ENCODE measurements at regions of chr12 and their contacts with region 1.

Region 1: DNA sequence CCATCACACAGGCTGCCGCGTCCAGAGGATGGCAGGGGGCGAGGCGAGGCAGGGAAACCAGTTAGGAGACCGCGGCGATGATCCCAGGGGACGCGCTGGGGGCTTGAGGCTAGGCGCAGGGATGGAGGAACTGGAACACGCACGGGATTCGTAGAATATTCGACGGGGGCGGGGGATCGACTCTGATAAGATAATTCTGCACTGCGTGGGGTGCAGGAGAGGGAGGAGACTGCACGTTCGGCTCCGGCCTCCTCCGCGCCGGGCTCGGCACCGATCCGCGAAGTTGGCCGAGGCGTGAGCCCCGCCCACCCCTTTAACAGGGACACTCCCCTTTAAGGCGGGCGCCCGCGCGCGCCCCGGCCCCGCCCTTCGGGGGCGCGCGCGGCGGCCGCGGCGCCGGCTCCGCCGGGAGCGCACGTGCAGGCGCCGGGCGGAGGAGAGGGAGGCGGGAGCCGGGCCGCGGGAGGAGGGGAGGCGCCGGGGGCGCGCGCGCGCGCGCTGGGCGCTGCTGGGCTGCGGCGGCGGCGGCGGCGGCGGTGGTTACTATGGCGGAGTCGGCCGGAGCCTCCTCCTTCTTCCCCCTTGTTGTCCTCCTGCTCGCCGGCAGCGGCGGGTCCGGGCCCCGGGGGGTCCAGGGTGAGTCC is at the start of gene ACVR1B:
- DNase-seq: peak; percentile 92
- H3K4me3 ChIP-seq: peak within 1 kb of the TSS; percentile 59 to 89 (median 73)
- H3K27ac ChIP-seq: peak within 1 kb of the TSS; percentile 58
- H3K4me1 ChIP-seq: peaks cover 28% of the 10 kb centered on the region
- H3K27me3 ChIP-seq: peaks cover 0 to 4% of the 10 kb centered on the region in 2 experiments
- CTCF ChIP-seq: no peak
- POLR2A ChIP-seq: peak; percentile 54
- total RNA-seq, gene ACVR1B: 25.4 and 33.7 TPM in 2 replicates

Region 2: GRCh38 chr12:51970904-51971646 is 19.8 kb after region 1 on chr12:
- CTCF ChIA-PET with region 1: interaction called, 24 read pairs
- POLR2A ChIA-PET with region 1: no interaction called
- dilution Hi-C with region 1: no loop called
- intact Hi-C with region 1: loop called (anchors 1 kb)
- DNase-seq: peak; percentile 89
- H3K4me3 ChIP-seq: peak overlapping the region in 1 of 3 experiments; percentile 3
- H3K27ac ChIP-seq: peak overlapping the region; percentile 98
- H3K4me1 ChIP-seq: peaks cover 70% of the 10 kb centered on the region
- H3K27me3 ChIP-seq: no peaks in the 10 kb centered on the region
- CTCF ChIP-seq: peak; percentile 82 to 85
- POLR2A ChIP-seq: no peak

Region 3: GRCh38 chr12:52082988-52083637 is 131.8 kb after region 1 on chr12:
- CTCF ChIA-PET with region 1: no interaction called
- POLR2A ChIA-PET with region 1: no interaction called
- dilution Hi-C with region 1: no loop called
- intact Hi-C with region 1: no loop called
- DNase-seq: peak; percentile 64
- H3K4me3 ChIP-seq: no peak overlapping the region
- H3K27ac ChIP-seq: no peak overlapping the region
- H3K4me1 ChIP-seq: peaks cover 5% of the 10 kb centered on the region
- H3K27me3 ChIP-seq: no peaks in the 10 kb centered on the region
- CTCF ChIP-seq: peak; percentile 96 to 98
- POLR2A ChIP-seq: no peak